Right ventricle myocardium inferior (tissue), 1 donor: ENCODE measurements at regions of chr17 and their contacts with region 1.

Region 1: DNA sequence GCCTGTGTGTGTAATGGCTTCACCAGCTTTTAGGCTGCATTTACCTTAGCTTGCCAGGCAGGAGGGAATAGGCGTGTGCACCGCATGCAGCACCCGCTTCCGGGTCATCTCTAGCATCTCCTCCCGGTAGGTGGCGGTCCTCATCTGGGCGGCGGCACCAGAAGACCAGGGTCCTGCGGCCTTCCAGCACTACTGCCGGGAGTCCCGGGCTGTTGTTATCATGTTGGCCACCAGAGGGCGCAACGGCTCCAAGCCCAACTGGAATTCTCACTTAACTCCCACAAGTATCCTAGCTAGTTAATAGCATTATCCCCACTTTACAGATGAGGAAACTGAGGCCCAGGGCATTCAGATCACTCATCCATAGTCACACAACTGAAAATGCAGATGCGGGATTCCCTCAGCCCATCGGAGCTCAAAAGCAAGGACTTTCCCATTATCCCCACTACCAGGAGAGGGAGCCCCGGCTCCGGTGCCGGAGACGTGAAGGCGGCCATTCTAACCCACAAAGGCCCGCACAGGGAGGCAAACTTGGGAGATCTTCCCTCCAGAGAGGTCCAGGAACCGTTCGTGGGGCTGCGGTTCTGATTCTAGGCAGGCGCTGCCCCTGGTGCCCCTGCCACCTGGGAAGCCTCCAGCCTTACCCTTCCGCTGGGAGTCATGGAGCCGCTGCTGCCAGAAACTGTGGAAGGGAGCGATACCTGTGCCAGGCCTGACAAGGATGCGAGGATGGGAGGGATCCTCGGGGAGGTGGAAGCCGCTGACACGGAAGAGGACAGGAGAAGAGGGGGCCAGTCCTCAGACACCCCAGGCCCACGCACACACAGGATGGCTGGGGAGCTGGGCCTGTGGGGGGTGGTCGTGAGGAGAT is 23.9 kb downstream of the LGALS9 start:
- DNase-seq: peak; percentile 87
- ATAC-seq: no peak

Region 2: DNA sequence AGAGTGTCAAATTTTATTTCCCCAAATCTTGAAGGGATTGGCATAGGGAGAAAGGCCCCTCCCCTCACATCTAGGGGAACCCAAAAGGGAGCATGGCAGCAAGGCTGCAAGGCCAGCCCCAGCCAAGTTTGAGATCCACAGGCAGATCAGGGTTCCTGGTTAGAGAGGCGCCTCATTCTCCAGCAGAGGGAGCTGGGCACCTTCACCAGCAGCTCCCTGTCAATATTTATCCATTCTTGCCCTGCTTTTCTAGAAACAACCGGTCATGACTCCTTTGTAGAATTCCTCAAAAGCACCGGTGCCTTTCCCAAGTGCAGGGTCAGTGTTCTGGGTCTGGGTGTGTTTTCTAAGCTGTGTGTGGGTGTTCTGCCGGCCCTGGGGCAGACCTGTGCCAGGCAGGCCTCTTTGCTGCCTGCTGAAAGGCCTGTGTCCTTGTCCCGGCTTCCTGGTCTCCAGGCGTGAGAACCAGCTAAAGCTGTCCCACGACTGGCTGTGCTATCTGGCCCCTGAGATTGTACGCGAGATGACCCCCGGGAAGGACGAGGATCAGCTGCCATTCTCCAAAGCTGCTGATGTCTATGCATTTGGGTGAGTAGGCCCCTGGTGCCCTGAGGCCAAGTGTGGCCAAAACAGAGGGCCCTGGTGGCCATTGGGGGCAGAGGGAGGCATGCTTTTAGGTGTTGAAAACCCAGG is 45.1 kb before region 1 on chr17:
- intact Hi-C with region 1: loop called (anchors 1 kb)
- DNase-seq: peak; percentile 71
- ATAC-seq: peak; percentile 56

Region 3: DNA sequence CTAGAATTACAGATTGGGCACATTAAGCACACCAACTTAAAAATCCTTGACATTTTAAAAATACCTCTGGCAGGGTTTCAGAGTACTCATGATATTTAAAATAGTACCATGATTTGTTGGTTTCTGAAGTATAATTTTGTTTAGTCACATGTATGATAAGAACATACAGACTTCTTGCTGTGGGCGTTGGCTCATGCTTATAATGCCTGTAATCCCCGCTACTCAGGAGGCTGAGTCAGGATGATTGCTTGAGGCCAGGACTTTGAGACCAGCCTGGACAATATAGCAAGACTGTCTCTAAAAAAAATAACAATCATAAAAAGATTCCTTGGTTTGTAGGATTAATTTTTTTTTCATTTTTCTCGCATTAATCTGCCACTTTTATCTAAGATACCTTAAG is 66.9 kb after region 1 on chr17:
- intact Hi-C with region 1: no loop called
- DNase-seq: no peak
- ATAC-seq: no peak

Region 4: DNA sequence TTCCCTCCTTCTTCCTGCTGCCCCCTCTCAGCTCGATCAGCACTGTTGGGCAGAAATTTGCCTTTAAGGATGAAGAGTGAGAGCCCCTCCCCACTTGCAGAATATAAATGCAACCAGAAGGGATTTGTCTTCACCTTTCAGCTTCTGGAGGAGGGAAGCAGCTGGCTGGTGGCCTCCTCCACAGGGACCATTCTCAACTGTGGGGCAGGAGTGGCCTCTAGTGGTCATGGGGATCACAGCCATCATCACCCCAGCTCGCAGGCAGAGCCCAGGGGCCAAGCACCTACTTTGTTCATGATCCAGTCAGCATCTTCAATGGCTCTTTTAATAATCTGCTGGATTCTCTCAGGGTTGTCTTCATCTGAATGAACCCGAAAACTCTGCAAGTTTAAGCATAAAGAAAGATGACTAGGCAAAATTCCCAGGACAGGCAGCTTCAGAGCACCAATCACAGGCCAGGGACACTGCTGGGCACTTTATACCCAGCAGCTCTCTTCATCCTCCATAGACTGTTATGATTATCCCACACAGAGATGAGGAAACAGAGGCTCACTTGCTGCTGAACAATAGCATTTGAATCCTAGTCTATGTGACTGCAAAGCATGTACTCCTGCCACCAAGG is 225.2 kb after region 1 on chr17:
- intact Hi-C with region 1: loop called (anchors 1 kb)
- DNase-seq: peak; percentile 81
- ATAC-seq: peak; percentile 95